Activated T-helper 2 cell treated with anti-CD3 and anti-CD28 coated beads, Interferon-gamma antibody, Interleukin-2, Interleukin-4, amounts not matched to agents 10 μg/mL and 5 μg/mL and 100 μg/mL, durations not matched to agents 14 hours and 24 hours and 36 hours (primary cell): ENCODE measurements at regions of chr6 and their contacts with region 1.

Region 1: DNA sequence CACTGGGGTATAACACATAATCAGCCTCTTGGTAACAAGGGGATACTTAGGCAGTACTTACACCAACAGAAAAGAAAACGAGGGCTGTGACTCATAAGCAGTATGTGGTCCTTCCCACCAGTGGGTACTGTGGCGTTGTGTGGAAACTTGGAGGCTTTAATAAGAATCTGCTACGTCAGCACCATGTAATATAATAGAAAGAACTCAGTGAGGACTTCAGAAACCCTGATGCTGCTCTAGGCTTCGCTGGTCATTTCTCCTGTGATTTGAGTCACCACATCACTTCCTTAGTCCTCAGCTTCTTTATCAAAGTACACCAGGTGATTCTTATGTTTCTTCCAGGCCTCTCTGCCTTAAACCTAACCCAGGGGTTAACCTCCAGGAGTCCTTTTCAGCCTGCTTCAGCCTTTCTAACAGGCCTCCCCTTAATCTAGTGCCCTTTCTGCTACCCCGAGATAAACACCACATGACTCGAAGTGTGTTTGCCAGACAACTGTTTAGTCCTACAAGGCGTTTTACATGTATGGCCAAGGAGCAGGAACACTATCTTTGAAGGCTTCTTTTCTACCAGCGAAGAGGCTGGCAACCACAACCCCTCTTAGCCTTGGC is 68.5 kb downstream of the FYN start:
- DNase-seq: peak; percentile 59
- H3K4me3 Mint-ChIP-seq: peak overlapping the region; percentile 26
- H3K27ac Mint-ChIP-seq: peak overlapping the region; percentile 96
- H3K4me1 Mint-ChIP-seq: peaks cover 76% of the 10 kb centered on the region
- H3K27me3 Mint-ChIP-seq: no peaks in the 10 kb centered on the region

Region 2: DNA sequence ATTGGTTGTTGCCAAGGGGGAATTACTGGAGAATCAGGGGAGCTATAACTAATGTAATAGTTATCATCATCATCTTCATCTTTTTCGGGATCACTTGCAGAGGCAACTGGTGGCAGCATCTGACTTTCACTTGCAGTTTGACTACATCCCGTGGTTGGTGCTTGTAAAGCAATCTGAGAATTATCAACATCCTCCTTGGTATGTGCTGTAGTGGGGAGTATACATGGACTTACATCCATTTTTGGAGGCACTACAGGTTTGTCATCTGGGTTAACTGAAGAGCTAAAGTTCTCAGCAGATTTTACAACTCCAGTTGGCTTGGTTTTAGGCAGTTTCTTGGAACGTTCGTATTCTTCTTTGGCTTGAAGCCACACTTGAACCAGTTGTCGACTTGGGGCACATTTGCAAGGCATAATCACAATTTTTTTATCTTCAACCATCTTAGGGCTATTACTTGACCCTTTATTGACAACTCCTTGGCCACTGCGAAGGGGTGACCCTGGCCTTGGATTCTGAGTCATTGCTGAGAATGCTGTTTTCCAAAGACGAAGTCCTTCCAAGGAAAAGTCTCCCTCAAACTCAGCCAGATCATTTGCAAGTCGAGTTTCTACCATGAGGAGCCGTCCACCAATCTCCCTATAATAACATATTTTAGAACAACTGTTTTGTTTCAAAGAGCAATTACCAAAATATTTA is 437.2 kb before region 1 on chr6:
- intact Hi-C with region 1: no loop called
- DNase-seq: peak; percentile 19
- H3K4me3 Mint-ChIP-seq: no peak overlapping the region
- H3K27ac Mint-ChIP-seq: peak overlapping the region; percentile 24
- H3K4me1 Mint-ChIP-seq: peaks cover 14% of the 10 kb centered on the region
- H3K27me3 Mint-ChIP-seq: no peaks in the 10 kb centered on the region

Region 3: DNA sequence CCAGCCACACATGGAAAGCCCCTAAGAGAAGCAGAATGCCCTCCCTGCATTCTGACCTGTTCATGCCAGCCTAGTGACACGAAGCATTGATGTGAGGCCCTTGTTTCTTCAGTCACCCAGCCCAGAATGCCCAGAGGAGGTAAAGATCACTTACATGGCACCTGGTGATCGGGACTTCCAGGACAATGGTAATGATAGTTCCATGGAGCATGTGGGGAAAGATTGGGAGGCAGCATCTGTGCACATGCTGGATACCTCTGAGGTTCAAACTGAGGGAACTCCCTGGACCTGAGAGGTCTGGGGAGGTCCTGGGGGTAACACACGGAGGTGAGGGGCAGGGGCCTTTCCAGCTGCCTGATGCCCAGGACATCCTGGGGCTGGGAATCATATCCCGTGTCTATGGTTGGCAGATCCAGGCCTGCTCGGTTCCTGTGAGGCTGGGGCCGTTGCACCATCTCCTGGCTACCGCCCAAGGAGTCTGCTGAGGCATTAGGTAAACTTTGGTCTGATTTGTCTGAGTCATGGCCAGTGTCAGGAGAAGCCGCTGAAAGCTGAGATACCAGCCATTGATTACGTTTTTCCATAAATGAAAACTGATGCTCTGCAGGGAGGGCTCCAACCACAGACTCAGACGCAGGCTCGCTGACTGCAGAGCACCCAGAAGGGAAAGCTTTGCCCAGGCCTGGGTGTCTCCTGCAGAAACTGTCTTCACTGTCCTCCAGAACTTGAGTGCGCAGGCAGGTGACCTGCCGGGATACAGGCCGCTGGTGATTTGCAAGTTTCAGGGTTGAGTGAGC is 213.4 kb before region 1 on chr6:
- intact Hi-C with region 1: no loop called
- DNase-seq: no peak
- H3K4me3 Mint-ChIP-seq: no peak overlapping the region
- H3K27ac Mint-ChIP-seq: no peak overlapping the region
- H3K4me1 Mint-ChIP-seq: peaks cover 20% of the 10 kb centered on the region
- H3K27me3 Mint-ChIP-seq: no peaks in the 10 kb centered on the region

Region 4: GRCh38 chr6:111750753-111751684 is 53.7 kb before region 1 on chr6:
- intact Hi-C with region 1: loop called (anchors 2 kb)
- DNase-seq: peak; percentile 53
- H3K4me3 Mint-ChIP-seq: peak overlapping the region; percentile 50
- H3K27ac Mint-ChIP-seq: peak overlapping the region; percentile 96
- H3K4me1 Mint-ChIP-seq: peaks cover 80% of the 10 kb centered on the region
- H3K27me3 Mint-ChIP-seq: no peaks in the 10 kb centered on the region

Region 5: GRCh38 chr6:111793711-111794111 is 11.0 kb before region 1 on chr6:
- intact Hi-C with region 1: loop called (anchors 1 kb)
- DNase-seq: no peak
- H3K4me3 Mint-ChIP-seq: peak overlapping the region; percentile 63
- H3K27ac Mint-ChIP-seq: peak overlapping the region; percentile 94
- H3K4me1 Mint-ChIP-seq: peaks cover 71% of the 10 kb centered on the region
- H3K27me3 Mint-ChIP-seq: no peaks in the 10 kb centered on the region

Region 6: DNA sequence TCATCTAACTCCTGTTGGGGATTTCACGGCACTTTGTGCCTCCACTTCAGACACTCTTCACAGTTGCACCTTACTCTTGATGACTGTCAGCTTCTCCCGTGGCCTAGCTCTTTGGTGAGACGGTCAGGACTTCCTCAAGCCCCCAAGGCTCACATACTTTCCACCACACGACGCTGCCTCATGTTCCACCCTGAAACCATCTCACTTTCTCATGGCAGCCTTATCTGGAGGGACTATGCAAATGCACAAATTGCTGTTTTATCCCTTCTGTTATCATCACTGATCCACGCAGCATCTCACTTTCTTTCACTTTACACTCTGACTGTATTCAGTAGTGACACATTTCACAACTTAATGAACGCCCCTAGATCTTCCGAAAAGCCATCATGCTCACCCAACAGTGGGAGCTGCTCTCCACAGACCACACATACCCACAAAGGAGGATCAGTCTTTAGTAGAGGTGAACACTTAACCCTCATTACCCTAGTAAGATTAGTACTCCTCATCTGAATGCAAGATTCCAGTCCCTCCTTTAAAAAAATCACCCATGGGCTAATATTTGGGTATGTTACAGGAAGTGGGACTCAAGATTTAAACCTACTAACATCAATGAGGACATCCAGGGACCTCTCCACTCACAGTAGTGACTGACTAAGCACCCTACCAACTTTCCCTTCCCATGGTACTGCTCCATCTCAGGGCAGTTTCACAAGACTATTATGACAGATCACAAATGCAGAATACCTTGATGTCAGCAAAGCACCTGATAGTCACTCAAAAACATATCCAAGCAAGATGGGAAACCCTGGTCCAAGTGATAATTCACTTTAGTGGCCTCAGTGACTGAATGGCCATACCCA is 33.1 kb after region 1 on chr6:
- intact Hi-C with region 1: loop called (anchors 1 kb)
- DNase-seq: peak; percentile 59
- H3K4me3 Mint-ChIP-seq: peak overlapping the region; percentile 77
- H3K27ac Mint-ChIP-seq: peak overlapping the region; percentile 97
- H3K4me1 Mint-ChIP-seq: peaks cover 67% of the 10 kb centered on the region
- H3K27me3 Mint-ChIP-seq: no peaks in the 10 kb centered on the region

Region 7: DNA sequence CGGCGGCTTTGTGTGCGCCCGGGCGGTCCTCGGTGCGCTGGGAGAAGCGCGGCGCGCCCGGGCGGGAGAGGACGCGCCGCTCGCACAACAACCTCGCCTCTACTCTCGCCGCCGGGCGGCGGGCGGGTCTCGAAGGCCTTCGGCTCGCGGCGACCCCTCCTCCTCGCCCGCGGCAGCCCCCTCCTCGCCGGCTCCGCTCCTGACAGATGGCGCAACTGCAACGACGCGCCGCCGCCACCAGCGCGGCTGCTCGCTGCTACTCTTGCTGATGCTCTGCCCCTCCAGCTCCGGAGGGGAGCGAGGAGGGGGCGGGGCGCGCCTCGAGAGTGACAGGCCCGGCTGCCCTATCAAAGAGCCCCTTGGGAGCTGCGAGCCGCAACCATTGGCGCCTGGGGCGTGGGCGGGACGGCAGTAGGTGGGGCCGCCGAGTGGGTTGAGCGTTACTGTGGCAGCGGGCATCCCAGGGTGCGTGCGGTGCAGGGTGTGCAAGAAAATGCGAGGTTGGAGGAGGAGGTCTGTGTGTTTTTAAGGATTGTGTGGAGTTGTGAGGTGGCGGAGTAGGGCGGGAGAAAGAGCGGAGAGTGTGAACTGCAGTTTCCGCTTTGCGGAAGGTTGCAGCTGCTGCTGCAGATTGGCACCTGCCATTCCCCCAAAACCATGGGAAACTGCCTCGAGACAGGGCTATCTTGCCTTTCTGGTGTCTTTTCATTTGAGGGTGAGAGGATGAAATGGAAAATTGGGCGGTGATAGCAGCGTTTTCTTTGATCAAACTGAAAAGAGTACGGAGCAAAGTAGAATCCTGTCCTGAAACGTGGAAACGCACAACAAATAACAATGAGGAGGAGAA is 68.7 kb after region 1 on chr6 and contains the start of gene FYN:
- intact Hi-C with region 1: loop called (anchors 1 kb)
- DNase-seq: peak; percentile 98
- H3K4me3 Mint-ChIP-seq: peak within 1 kb of the TSS; percentile 97
- H3K27ac Mint-ChIP-seq: peak within 1 kb of the TSS; percentile 94
- H3K4me1 Mint-ChIP-seq: peaks cover 40% of the 10 kb centered on the region
- H3K27me3 Mint-ChIP-seq: peaks cover 2% of the 10 kb centered on the region
- total RNA-seq, gene FYN: 359 TPM in 2 replicates

Region 8: DNA sequence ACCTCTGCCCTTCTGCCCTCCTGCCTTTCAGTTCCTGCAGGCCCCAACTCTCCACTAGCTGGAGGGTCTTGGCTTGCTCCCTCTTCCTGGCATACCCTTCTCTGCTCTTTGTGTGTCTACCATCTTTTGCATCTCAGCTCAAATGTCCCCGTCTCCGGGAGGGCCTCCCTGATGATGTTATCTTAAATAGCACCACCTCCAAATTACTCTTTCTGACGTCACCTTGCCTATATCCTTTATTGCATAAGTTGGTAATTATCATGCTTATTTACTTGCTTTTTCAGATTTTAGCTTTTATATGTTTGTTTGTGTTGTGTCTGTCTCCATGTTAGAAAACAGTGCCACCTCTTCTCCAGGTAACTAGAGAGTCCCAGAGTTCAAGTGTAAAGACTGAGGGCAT is 104.5 kb after region 1 on chr6:
- intact Hi-C with region 1: no loop called
- DNase-seq: no peak
- H3K4me3 Mint-ChIP-seq: no peak overlapping the region
- H3K27ac Mint-ChIP-seq: no peak overlapping the region
- H3K4me1 Mint-ChIP-seq: peaks cover 9% of the 10 kb centered on the region
- H3K27me3 Mint-ChIP-seq: no peaks in the 10 kb centered on the region

Region 9: DNA sequence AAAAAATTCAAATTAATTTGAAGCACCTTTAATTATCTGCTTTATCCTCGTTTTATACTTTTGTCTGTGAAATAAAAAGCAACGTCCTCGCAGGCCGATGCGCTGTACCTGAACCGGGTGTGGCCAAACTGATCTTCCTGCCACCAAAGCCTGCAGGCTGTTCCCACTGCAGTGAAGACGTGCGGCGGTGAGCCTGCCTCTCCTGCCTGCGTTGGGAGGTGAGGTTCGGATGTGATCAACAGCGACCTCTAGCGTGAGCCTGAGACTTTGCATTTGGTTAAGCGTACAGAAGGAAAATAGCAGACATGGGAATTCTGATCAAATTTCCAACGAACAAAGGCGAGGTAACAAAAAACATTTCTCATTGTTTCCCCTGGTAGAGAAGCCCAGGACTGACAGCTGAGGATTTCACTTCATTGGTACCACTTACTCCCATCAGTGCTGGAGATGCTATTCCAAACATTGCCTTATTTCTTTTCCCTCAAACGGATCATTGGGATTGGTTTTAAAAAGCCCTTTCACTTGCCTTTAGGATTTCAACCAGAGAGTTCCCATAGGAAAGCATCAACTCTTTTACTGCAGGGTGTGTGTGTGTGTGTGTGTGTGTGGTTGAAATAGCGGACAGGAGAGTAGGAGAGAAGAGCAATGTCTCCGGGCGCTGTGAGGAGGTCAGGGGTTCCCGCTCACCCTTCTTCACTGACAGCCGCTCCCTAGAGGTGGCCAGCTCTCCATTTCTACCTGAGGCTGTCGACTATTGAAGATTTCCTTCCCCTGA is 192.5 kb after region 1 on chr6:
- intact Hi-C with region 1: loop called (anchors 2 kb)
- DNase-seq: peak; percentile 69
- H3K4me3 Mint-ChIP-seq: no peak overlapping the region
- H3K27ac Mint-ChIP-seq: no peak overlapping the region
- H3K4me1 Mint-ChIP-seq: peaks cover 37% of the 10 kb centered on the region
- H3K27me3 Mint-ChIP-seq: no peaks in the 10 kb centered on the region